ENCODE measurements at regions of chr1 and their contacts with region 1.

Region 1: DNA sequence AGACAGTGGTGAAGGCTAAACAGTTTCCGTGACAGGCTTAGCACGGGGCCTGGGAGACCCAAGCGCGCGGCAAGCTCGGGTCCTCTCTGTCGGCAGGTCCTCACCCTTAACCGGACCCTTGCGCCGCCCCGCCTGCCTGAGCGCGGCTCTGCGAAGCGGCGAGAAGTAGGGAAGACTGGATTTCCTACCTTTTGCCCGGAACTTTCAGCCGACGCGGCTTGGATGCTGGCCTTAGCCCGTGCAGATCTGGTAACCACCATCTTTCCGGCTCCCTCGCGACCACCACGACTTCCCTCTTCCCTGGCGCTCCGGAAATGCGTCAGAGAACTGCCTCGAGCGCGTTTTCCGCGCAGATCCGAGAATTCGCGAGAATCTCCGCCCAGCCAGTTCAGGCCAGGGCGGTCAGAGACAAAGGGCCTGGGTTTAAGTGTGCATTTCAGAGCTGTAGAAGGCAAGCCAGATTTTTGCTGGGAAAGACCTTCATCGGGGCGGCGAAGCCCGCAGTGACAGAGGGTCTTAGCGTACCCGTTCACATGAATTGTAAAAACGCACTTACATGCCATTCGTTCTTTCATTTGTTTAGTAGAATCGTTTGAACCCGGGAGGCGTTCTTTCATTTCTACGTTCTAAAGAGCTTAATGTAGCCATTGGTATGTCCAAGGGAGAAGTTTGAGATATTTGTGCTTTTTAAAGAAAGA is at the start of gene DNTTIP2:
- DNase-seq: peak; percentile 95
- H3K4me3 Mint-ChIP-seq: peak within 1 kb of the TSS; percentile 92
- H3K27ac Mint-ChIP-seq: peak within 1 kb of the TSS; percentile 97
- H3K4me1 Mint-ChIP-seq: peaks cover 42% of the 10 kb centered on the region
- H3K27me3 Mint-ChIP-seq: no peaks in the 10 kb centered on the region
- total RNA-seq, gene DNTTIP2: 58.5 to 64.5 TPM

Region 2: GRCh38 chr1:93749894-93750301 is 129.1 kb before region 1 on chr1:
- CTCF ChIA-PET with region 1: no interaction called
- intact Hi-C with region 1: no loop called
- DNase-seq: peak; percentile 28
- H3K4me3 Mint-ChIP-seq: no peak overlapping the region
- H3K27ac Mint-ChIP-seq: no peak overlapping the region
- H3K4me1 Mint-ChIP-seq: peaks cover 14% of the 10 kb centered on the region
- H3K27me3 Mint-ChIP-seq: peaks cover 10% of the 10 kb centered on the region

Region 3: GRCh38 chr1:93909146-93910050 is 30.4 kb after region 1 on chr1 and contains the start of gene GCLM:
- CTCF ChIA-PET with region 1: interaction called, 6 read pairs
- intact Hi-C with region 1: loop called (anchors 1 kb)
- DNase-seq: peak; percentile 88
- H3K4me3 Mint-ChIP-seq: peak within 1 kb of the TSS; percentile 82
- H3K27ac Mint-ChIP-seq: peak within 1 kb of the TSS; percentile 87
- H3K4me1 Mint-ChIP-seq: peaks cover 27% of the 10 kb centered on the region
- H3K27me3 Mint-ChIP-seq: no peaks in the 10 kb centered on the region
- total RNA-seq, gene GCLM: 19.5 to 22.7 TPM

Region 4: DNA sequence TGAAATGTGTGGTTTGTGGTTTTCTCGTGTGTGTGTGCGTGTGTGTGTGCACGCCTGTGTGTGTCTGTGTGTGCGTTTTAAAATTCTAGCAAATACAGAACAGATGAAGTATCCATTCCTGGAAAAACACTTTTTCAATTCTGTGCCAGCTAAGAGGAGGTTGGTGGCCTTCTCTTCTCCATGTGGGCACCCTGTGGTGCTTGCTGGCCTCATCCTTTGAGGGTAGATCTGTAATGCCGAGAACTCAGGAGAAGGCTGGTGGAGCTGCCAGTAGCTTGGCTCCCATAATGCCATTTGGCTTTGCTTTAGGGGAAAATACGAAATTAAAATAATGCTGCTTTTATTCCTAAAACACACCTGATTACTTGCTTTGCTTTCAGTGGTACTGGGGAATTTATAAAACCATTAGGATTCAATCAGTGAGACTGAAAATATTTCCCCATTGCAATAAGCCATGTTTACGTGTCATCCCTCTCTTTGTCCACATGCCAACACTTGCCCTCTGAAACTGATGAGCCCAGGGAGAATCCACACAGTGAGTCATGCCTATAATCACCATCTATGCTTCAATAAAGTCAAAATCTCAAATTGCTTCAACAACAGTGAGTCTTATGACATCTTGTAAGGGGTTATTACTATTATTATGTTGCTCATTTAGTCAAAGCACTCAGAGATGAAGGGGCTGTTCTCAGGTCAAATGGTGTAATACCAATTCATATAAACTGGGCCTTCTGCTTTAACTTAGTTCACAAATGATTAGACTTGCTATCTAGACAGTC is 202.7 kb after region 1 on chr1:
- CTCF ChIA-PET with region 1: no interaction called
- intact Hi-C with region 1: no loop called
- DNase-seq: no peak
- H3K4me3 Mint-ChIP-seq: no peak overlapping the region
- H3K27ac Mint-ChIP-seq: no peak overlapping the region
- H3K4me1 Mint-ChIP-seq: peaks cover 3% of the 10 kb centered on the region
- H3K27me3 Mint-ChIP-seq: peaks cover 9% of the 10 kb centered on the region

Measured in activated naive CD4-positive, alpha-beta T cell treated with anti-CD3 and anti-CD28 coated beads for 36 hours (primary cell).